ENCODE measurements at regions of chr9 and their contacts with region 1.

Region 1: GRCh38 chr9:136051517-136052432 is 43.3 kb downstream of the NACC2 start:
- DNase-seq: peak in 4 of 5 donors; percentile 57 to 72 (median 62)
- ATAC-seq: peak; percentile 24 to 66 (median 37)
- H3K4me3 ChIP-seq: peak overlapping the region; percentile 29 to 63 (median 53)
- H3K27ac ChIP-seq: peak overlapping the region; percentile 32 to 88 (median 80)
- H3K4me1 ChIP-seq: peaks cover 6 to 85% (median 60%) of the 10 kb centered on the region in 12 donors
- H3K27me3 ChIP-seq: no peaks in the 10 kb centered on the region
- CTCF ChIP-seq: no peak
- POLR2A ChIP-seq: no peak

Region 2: GRCh38 chr9:136011703-136012521 is 39.9 kb before region 1 on chr9:
- intact Hi-C with region 1: loop called in 1 of 10 experiments (anchors 5 kb)
- DNase-seq: peak; percentile 86 to 93 (median 92)
- ATAC-seq: peak; percentile 77 to 81 (median 78)
- H3K4me3 ChIP-seq: peak overlapping the region in 8 of 12 donors; percentile 14 to 42 (median 24)
- H3K27ac ChIP-seq: peak overlapping the region; percentile 19 to 83 (median 75)
- H3K4me1 ChIP-seq: peaks cover 8 to 38% (median 23%) of the 10 kb centered on the region in 12 donors
- H3K27me3 ChIP-seq: no peaks in the 10 kb centered on the region
- CTCF ChIP-seq: no peak
- POLR2A ChIP-seq: no peak

Region 3: DNA sequence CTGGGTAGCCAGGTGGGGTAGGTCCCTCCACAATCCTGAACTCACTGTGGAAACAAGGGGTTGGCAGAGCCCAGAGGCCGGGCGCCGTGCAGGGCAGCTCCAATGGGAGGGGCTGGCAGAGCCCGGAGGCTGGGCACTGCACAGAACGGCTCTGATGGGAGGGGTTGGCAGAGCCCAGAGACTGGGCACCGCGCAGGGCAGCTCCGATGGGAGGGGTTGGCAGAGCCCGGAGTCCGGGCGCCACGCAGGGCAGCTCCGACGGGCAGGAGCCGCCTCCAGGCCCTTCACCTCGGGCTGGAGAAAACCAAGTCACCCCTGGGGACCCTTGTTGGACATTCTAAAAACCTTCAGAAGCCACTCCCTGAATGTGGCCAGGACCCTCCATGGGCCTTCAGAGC is 34.0 kb after region 1 on chr9:
- intact Hi-C with region 1: loop called in 5 of 10 experiments (anchors 2 to 5 kb)
- DNase-seq: peak; percentile 69 to 89 (median 83)
- ATAC-seq: peak; percentile 89 to 91 (median 90)
- H3K4me3 ChIP-seq: no peak overlapping the region
- H3K27ac ChIP-seq: peak overlapping the region in 11 of 12 donors; percentile 59 to 99 (median 77)
- H3K4me1 ChIP-seq: peaks cover 23 to 99% (median 83%) of the 10 kb centered on the region in 12 donors
- H3K27me3 ChIP-seq: no peaks in the 10 kb centered on the region
- CTCF ChIP-seq: no peak
- POLR2A ChIP-seq: no peak

Region 4: GRCh38 chr9:136093995-136094881 is 42.5 kb after region 1 on chr9:
- intact Hi-C with region 1: loop called in 4 of 10 experiments (anchors 5 kb)
- DNase-seq: peak; percentile 85 to 93 (median 91)
- ATAC-seq: peak; percentile 71 to 77 (median 74)
- H3K4me3 ChIP-seq: peak overlapping the region; percentile 71 to 99 (median 89)
- H3K27ac ChIP-seq: peak overlapping the region; percentile 91 to 99 (median 98)
- H3K4me1 ChIP-seq: peaks cover 10 to 71% (median 63%) of the 10 kb centered on the region in 12 donors
- H3K27me3 ChIP-seq: no peaks in the 10 kb centered on the region
- CTCF ChIP-seq: peak in 1 of 12 donors; percentile 23
- POLR2A ChIP-seq: no peak

Measured in heart left ventricle (tissue), 16 donors.